Heart left ventricle (tissue), 16 donors: ENCODE measurements at regions of chr9 and their contacts with region 1.

Region 1: GRCh38 chr9:119986213-119986612 is 593.8 kb downstream of the CDK5RAP2 start:
- DNase-seq: no peak
- ATAC-seq: no peak
- H3K4me3 ChIP-seq: no peak overlapping the region
- H3K27ac ChIP-seq: no peak overlapping the region
- H3K4me1 ChIP-seq: no peaks in the 10 kb centered on the region
- H3K27me3 ChIP-seq: peaks cover 0 to 4% (median 0%) of the 10 kb centered on the region in 9 donors
- CTCF ChIP-seq: no peak
- POLR2A ChIP-seq: no peak

Region 2: DNA sequence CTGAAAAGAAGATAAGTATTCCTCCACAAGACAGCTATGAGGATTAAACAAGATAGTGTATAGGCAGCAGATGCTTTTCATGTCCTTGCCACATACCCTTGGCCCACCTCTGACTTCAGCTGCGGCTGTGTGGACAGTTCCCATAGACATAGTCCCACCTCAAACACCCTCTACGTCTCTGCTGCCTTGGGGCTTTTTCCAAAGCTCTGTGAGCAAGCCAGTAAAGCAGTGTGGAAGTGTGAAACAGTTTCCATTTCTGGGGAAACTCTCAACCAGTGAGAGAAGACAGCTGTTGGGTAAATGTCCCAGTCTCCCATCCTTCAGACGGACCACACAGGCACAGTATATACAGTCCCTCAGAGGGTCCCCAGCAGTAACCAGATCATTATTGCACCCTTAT is 468.3 kb after region 1 on chr9:
- intact Hi-C with region 1: loop called in 1 of 10 experiments (anchors 10 kb)
- DNase-seq: no peak
- ATAC-seq: no peak
- H3K4me3 ChIP-seq: no peak overlapping the region
- H3K27ac ChIP-seq: no peak overlapping the region
- H3K4me1 ChIP-seq: no peaks in the 10 kb centered on the region
- H3K27me3 ChIP-seq: no peaks in the 10 kb centered on the region
- CTCF ChIP-seq: no peak
- POLR2A ChIP-seq: no peak